ENCODE measurements at regions of chr1 and their contacts with region 1.

Region 1: GRCh38 chr1:54397090-54397591 is 9.1 kb downstream of the SSBP3 start:
- DNase-seq: peak; percentile 74 to 94 (median 86)
- H3K4me3 ChIP-seq: no peak overlapping the region
- H3K27ac ChIP-seq: peak overlapping the region in 3 of 5 donors; percentile 17 to 65 (median 41)
- H3K4me1 ChIP-seq: peaks cover 12 to 33% of the 10 kb centered on the region in 2 donors
- H3K27me3 ChIP-seq: no peaks in the 10 kb centered on the region
- CTCF ChIP-seq: no peak
- POLR2A ChIP-seq: peak in 1 of 2 donors; percentile 18

Region 2: DNA sequence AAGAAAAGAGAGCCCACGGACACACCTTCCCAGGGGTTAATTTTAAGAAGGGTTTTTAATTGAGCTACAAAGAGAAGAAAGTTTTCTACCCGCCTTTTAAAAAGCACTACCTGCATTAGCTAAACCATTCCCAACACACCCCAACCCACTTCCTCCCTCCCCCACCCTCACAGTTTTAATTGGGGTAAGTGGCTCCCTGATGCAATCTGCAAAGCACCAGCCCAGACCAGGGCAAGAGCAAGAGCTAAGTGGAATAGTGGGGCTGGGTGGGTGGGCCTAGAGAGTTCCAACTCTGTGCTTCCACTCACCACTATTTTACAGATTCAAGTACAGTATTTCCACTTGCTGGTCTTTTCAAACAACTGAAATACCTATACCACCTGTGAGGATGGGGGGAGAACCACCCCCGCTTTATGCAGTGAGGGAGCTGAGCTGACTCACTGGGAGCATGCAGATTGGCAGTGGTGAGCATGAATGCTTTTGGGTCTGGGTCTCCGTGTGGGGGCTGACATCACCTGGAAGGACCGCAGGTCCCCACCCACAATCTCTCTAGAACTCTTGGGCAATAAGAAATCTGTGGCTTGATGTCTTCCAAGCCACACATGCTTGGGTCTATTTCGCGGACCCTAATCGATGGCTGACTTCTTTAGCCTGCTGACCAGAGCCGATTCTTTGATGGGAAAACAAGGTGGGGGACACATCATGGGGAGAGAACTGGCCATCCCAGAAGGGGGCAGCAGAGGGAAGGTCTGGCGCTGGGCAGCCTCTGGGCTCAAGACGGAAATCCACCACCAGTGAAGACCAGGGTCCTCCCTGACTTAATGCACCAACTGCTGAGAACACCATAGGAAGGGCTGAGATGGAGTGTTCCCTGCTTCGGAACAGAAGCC is 86.5 kb before region 1 on chr1:
- intact Hi-C with region 1: loop called in 1 of 2 experiments (anchors 10 kb)
- DNase-seq: peak in 6 of 7 donors; percentile 53 to 82 (median 62)
- H3K4me3 ChIP-seq: no peak overlapping the region
- H3K27ac ChIP-seq: peak overlapping the region in 2 of 5 donors; percentile 77 to 91
- H3K4me1 ChIP-seq: peaks cover 9 to 38% of the 10 kb centered on the region in 2 donors
- H3K27me3 ChIP-seq: no peaks in the 10 kb centered on the region
- CTCF ChIP-seq: peak; percentile 13 to 64 (median 54)
- POLR2A ChIP-seq: no peak

Region 3: DNA sequence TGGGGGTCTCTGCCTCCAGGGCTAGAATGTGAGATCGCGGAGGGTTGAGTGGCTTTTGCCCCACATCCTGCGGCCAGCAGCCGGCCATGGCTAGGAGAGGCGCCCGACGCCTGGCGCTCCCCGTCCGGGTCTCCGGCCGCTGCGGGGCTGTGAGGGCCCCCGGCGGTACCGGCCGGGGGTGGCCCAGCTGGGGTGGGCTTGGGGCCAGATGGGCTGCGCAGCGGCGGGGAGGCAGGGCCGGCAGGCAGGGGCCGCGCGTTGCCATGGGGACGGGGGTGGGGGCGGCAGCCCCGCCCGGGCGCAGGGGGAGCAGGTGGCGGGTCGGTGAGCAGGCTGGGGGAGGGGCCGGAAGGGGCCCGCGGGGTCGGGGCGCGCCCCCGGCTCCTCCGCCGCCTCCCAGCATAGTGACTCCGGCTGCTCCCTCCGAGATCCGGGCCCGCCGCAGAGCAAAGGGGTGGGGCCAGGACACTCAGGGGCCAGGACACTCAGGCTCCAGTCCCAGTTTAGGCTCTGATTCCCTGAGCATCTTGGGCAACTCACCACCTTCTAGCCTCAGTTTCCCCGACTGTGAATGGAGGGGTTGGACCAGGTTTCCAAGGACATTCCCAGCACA is 77.6 kb after region 1 on chr1:
- intact Hi-C with region 1: no loop called
- DNase-seq: peak in 1 of 7 donors; percentile 16
- H3K4me3 ChIP-seq: peak overlapping the region in 1 of 4 donors; percentile 61
- H3K27ac ChIP-seq: peak overlapping the region in 1 of 5 donors; percentile 29
- H3K4me1 ChIP-seq: peaks cover 5 to 15% of the 10 kb centered on the region in 2 donors
- H3K27me3 ChIP-seq: no peaks in the 10 kb centered on the region
- CTCF ChIP-seq: no peak
- POLR2A ChIP-seq: no peak